CD8-positive, alpha-beta T cell (primary cell): ENCODE measurements at regions of chr15 and their contacts with region 1.

Region 1: DNA sequence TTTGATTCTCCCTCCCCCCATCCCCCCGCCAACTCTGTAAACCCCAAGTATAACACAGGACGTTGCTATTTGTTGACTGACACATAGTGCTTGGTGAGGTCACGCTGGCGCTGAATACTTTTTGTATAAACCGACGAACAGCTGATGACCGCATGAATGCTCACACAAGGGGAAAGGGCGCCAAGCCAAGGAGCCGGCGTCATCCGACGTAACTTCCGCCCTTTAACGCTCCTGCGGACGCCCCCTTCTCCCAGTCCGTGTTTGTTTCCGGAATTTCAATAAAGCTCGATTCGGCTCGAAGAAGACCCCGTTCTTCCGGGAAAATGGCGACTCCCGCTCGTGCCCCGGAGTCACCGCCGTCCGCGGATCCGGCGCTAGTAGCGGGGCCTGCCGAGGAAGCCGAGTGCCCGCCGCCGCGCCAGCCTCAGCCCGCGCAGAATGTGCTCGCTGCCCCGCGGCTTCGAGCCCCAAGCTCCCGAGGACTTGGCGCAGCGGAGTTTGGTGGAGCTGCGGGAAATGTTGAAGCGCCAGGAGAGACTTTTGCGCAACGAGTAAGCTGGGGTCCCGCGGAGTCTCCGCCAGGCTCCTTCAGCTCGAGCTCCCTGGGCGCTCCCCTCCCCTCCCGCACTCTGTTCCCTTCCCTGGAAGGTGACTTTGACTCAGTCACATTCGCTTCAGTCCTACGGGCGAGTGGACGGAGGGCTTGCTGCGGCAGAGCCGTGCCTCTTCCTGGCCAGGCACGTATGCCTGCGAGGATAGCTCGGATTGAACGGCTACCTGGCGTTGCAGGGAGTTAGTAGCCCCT is at the start of gene POLR2M:
- DNase-seq: peak; percentile 81 to 98 (median 89)
- ATAC-seq: peak; percentile 87
- H3K4me3 ChIP-seq: peak within 1 kb of the TSS; percentile 85 to 87
- H3K4me3 Mint-ChIP-seq: peak within 1 kb of the TSS; percentile 87
- H3K27ac ChIP-seq: peak within 1 kb of the TSS; percentile 89 to 98
- H3K27ac Mint-ChIP-seq: peak within 1 kb of the TSS; percentile 92
- H3K4me1 ChIP-seq: peaks cover 56% of the 10 kb centered on the region
- H3K4me1 Mint-ChIP-seq: peaks cover 74% of the 10 kb centered on the region
- H3K27me3 ChIP-seq: no peaks in the 10 kb centered on the region
- H3K27me3 Mint-ChIP-seq: no peaks in the 10 kb centered on the region
- CTCF ChIP-seq: no peak
- total RNA-seq, gene POLR2M: 96.7 to 103 TPM

Region 2: DNA sequence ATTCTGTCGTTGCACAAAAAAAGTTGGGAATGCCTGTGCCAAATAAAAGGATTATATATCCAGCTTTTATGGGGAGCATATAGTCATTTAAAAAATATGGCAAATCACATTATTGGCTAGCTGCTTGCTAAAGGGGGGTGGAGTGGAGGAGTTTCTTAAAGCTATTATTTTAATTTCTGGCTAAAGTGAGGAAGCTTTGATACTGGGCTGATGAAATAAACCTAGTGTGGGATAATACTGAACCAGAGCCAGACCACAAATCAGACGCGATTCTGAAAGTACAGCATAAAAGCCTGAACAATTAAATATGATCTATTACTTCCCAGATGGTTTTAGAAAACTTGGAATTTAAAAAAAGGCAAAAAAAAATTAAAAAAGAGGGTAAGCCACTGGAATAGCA is 14.3 kb after region 1 on chr15:
- CTCF ChIA-PET with region 1: interaction called, 3 read pairs
- POLR2A ChIA-PET with region 1: interaction called, 10 read pairs
- intact Hi-C with region 1: no loop called
- DNase-seq: no peak
- ATAC-seq: no peak
- H3K4me3 ChIP-seq: no peak overlapping the region
- H3K4me3 Mint-ChIP-seq: no peak overlapping the region
- H3K27ac ChIP-seq: no peak overlapping the region
- H3K27ac Mint-ChIP-seq: no peak overlapping the region
- H3K4me1 ChIP-seq: no peaks in the 10 kb centered on the region
- H3K4me1 Mint-ChIP-seq: peaks cover 2% of the 10 kb centered on the region
- H3K27me3 ChIP-seq: no peaks in the 10 kb centered on the region
- H3K27me3 Mint-ChIP-seq: no peaks in the 10 kb centered on the region
- CTCF ChIP-seq: no peak

Region 3: DNA sequence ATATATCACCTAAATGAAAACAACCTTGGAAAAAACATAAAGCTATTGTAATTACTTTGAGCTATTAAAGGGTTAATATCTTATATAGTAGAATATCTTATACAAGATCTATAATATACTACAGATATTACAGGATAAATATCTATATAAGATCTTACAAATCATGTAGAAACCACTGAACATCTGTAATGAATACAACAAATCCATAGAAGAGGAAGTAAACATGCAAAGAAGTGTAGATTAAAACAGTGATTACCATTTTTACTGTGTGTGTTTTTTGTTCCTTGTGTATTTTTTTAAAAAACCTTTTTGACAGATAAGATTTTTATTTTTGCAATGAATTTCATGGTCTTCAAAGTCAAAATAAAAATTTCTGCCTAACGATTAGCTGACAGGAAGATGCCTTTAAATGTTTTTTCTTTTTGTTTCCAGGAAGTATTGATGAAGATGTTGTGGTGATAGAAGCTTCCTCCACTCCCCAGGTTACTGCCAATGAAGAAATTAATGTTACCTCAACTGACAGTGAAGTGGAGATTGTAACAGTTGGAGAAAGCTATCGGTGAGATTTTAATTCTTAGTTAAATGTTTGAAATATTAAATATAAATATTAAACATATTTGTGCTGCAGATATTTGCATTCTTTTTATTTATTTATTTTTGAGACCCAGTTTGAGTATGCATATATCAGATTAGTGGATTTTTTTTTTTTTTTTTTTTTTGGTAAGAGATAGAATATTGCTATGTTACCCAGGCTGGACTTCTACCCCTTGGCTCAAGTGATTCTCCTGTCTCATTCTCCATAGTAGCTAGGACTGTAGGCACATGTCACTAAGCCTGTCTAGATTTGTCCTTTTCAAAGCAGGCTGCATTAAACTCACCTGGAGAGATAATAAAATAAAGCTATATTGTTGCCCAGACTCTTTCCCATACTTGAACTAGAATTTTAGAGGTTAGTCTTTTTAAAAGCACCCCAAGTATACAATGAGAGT is 1345.6 kb after region 1 on chr15:
- CTCF ChIA-PET with region 1: no interaction called
- POLR2A ChIA-PET with region 1: no interaction called
- intact Hi-C with region 1: loop called in 1 of 2 experiments (anchors 5 kb)
- DNase-seq: peak in 1 of 9 experiments; percentile 3
- ATAC-seq: no peak
- H3K4me3 ChIP-seq: no peak overlapping the region
- H3K4me3 Mint-ChIP-seq: no peak overlapping the region
- H3K27ac ChIP-seq: no peak overlapping the region
- H3K27ac Mint-ChIP-seq: peak overlapping the region; percentile 58
- H3K4me1 ChIP-seq: peaks cover 4% of the 10 kb centered on the region
- H3K4me1 Mint-ChIP-seq: peaks cover 26% of the 10 kb centered on the region
- H3K27me3 ChIP-seq: no peaks in the 10 kb centered on the region
- H3K27me3 Mint-ChIP-seq: no peaks in the 10 kb centered on the region
- CTCF ChIP-seq: no peak